Activated CD8-positive, alpha-beta T cell treated with anti-CD3 and anti-CD28 coated beads, Interleukin-2, amount 10 ng/mL, durations not matched to agents 7 days and 5 days (primary cell): ENCODE measurements at regions of chr4 and their contacts with region 1.

Region 1: DNA sequence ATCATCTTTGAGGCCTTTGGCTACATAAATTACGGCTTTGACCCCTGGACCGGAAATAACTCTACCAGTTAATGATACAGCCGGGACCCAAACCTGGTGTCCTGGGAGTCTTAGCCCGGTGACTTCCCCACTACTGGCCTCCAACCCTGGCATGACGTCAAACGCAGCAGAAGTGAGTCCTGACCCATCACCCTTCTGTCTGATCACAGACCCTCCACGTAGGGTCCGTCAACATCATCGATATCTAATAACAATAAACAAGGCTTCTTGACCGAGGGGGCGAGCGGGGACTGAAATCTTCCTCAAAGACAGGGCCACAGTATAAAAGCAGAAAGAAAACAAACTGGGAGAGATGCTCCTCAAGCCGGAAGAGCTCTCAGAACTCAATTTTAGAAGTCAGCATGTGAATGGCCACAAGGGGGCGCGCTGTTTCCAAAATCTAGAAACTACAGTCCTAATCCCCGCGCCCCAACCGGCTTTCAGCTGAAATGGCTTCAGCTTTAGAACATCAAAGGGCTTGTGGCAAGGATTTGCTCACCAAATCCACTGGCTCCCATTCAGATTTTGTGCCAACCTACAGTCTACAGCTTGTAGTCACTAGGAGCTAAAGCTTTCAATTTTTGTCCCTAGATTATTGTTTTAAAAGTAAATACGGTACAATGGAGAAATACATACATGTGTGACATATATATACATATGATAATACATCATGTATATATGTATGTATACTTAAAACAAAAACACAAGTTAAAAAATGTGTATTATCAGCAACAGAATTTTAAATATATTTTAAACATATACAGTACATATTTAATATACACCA is 46.4 kb upstream of the ENPP6 start:
- DNase-seq: peak; percentile 98
- ATAC-seq: peak; percentile 64
- H3K4me3 Mint-ChIP-seq: peak overlapping the region; percentile 48
- H3K27ac Mint-ChIP-seq: peak overlapping the region; percentile 63
- H3K4me1 Mint-ChIP-seq: peaks cover 50% of the 10 kb centered on the region
- H3K27me3 Mint-ChIP-seq: no peaks in the 10 kb centered on the region

Region 2: DNA sequence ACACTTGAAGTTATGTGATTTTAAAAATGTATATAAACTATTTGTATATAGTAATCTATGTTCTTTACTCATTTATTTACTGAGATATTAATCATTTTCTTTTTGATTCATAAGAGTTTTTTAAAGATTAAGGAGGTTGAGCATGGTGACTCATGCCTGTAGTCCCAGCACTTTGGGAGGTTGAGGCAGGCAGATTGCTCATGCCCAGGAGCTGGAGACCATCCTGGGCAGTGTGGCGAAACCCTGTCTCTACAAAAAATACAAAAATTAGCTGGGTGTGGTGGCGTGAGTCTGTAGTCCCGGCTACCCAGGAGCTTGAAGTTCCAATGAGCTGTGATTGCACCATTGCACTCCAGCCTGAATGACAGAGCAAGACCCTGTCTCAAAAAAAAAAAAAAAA is 189.1 kb before region 1 on chr4:
- CTCF ChIA-PET with region 1: no interaction called
- POLR2A ChIA-PET with region 1: no interaction called
- DNase-seq: no peak
- ATAC-seq: no peak
- H3K4me3 Mint-ChIP-seq: no peak overlapping the region
- H3K27ac Mint-ChIP-seq: no peak overlapping the region
- H3K4me1 Mint-ChIP-seq: no peaks in the 10 kb centered on the region
- H3K27me3 Mint-ChIP-seq: peaks cover 12% of the 10 kb centered on the region

Region 3: GRCh38 chr4:184201179-184201578 is 62.9 kb before region 1 on chr4:
- CTCF ChIA-PET with region 1: no interaction called
- POLR2A ChIA-PET with region 1: no interaction called
- DNase-seq: no peak
- ATAC-seq: no peak
- H3K4me3 Mint-ChIP-seq: no peak overlapping the region
- H3K27ac Mint-ChIP-seq: no peak overlapping the region
- H3K4me1 Mint-ChIP-seq: no peaks in the 10 kb centered on the region
- H3K27me3 Mint-ChIP-seq: peaks cover 16% of the 10 kb centered on the region

Region 4: DNA sequence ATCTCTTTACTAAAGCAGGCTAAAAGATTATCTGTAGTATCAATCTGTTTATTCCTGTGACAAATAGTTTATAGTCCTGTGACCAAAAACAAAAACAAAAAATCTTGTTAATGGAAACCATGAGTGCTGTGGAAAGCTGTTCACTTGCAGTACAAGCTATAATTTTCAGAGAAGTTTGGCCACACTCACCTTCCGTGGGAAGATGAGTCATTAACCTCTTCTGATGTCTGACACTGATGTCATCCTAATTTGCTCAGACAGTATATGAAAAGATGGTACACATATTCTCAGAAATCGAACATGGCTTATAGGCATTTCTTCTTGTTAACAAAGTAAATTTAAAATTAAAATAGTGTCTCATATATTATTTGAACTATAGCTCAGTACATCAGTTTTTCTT is 26.5 kb before region 1 on chr4:
- CTCF ChIA-PET with region 1: interaction called, 12 read pairs
- POLR2A ChIA-PET with region 1: no interaction called
- DNase-seq: peak; percentile 80
- ATAC-seq: peak; percentile 96
- H3K4me3 Mint-ChIP-seq: peak overlapping the region; percentile 56
- H3K27ac Mint-ChIP-seq: peak overlapping the region; percentile 94
- H3K4me1 Mint-ChIP-seq: peaks cover 49% of the 10 kb centered on the region
- H3K27me3 Mint-ChIP-seq: no peaks in the 10 kb centered on the region

Region 5: GRCh38 chr4:184293552-184293951 is 29.4 kb after region 1 on chr4:
- CTCF ChIA-PET with region 1: interaction called, 13 read pairs
- POLR2A ChIA-PET with region 1: no interaction called
- DNase-seq: peak; percentile 33
- ATAC-seq: peak; percentile 50
- H3K4me3 Mint-ChIP-seq: no peak overlapping the region
- H3K27ac Mint-ChIP-seq: no peak overlapping the region
- H3K4me1 Mint-ChIP-seq: peaks cover 14% of the 10 kb centered on the region
- H3K27me3 Mint-ChIP-seq: no peaks in the 10 kb centered on the region

Region 6: DNA sequence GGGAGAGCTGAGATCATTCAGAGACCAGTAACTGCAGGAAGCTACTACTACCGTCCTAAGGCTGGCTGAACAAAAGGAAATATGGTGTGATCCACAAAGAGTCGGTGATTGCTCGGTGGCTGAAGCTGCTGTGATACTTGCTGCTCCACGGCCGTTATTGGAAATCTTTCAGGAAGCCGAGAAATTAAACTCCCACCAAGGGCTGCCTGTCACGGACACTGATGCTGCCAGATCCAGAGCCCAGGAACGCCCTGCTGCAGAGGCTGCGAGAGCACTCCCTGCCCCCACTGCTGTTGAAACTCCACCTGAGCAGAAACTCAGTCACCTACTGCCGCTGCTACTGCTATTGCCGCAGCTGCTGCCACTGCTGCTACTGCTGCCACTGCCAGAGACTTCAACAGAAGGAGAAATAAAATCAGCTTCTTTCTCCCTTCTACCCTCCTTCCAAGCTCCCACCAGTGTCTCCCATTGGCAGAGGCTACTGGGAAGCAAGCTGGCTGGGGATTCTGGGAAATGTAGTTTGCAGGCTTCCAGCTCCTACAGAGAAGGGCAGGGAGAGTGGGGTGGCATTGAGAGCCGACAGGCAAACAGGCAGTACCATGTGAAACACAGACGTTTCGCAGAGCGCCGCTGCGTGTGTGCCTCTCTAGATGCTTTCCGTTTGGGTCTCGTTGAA is 79.5 kb after region 1 on chr4:
- CTCF ChIA-PET with region 1: interaction called, 11 read pairs
- POLR2A ChIA-PET with region 1: interaction called, 3 read pairs
- DNase-seq: peak; percentile 66
- ATAC-seq: peak; percentile 86
- H3K4me3 Mint-ChIP-seq: peak overlapping the region; percentile 81
- H3K27ac Mint-ChIP-seq: peak overlapping the region; percentile 86
- H3K4me1 Mint-ChIP-seq: peaks cover 27% of the 10 kb centered on the region
- H3K27me3 Mint-ChIP-seq: no peaks in the 10 kb centered on the region

Region 7: DNA sequence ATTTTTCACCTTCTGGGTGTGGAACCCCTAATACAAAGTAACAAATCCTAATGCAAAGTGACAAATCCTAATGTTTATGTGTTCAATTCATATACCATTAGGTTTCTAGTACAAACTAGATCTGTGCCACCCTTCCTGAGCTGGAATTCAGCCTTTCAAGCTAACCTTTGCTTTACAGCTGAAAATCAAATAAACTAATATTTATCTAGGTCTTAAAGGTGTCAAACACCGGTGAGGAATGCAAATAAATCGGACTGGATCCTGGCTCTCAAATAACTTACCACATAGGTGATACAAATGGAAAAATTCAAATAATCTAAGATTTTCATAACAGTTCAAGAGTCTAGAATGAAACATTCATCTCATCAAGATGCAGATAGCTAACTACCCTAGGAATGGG is 198.6 kb after region 1 on chr4:
- CTCF ChIA-PET with region 1: interaction called, 16 read pairs
- POLR2A ChIA-PET with region 1: no interaction called
- DNase-seq: no peak
- ATAC-seq: no peak
- H3K4me3 Mint-ChIP-seq: no peak overlapping the region
- H3K27ac Mint-ChIP-seq: no peak overlapping the region
- H3K4me1 Mint-ChIP-seq: peaks cover 50% of the 10 kb centered on the region
- H3K27me3 Mint-ChIP-seq: no peaks in the 10 kb centered on the region

Region 8: GRCh38 chr4:184649026-184649970 is 385.2 kb after region 1 on chr4 and contains the starts of genes CASP3 and PRIMPOL:
- CTCF ChIA-PET with region 1: interaction called, 27 read pairs
- POLR2A ChIA-PET with region 1: interaction called, 12 read pairs
- DNase-seq: peak; percentile 96
- ATAC-seq: peak; percentile 92
- H3K4me3 Mint-ChIP-seq: peak within 1 kb of the TSS; percentile 89
- H3K27ac Mint-ChIP-seq: peak within 1 kb of the TSS; percentile 88
- H3K4me1 Mint-ChIP-seq: peaks cover 51% of the 10 kb centered on the region
- H3K27me3 Mint-ChIP-seq: no peaks in the 10 kb centered on the region
- total RNA-seq, gene CASP3: 71.7 to 78.0 TPM
- total RNA-seq, gene PRIMPOL: 24.9 to 26.9 TPM